Vagina (tissue), 2 donors: ENCODE measurements at regions of chr10 and their contacts with region 1.

Region 1: GRCh38 chr10:33073641-33074415 is 115.8 kb upstream of the ITGB1 start:
- DNase-seq: no peak
- H3K4me3 ChIP-seq: no peak overlapping the region
- H3K27ac ChIP-seq: peak overlapping the region; percentile 32
- H3K4me1 ChIP-seq: peaks cover 9% of the 10 kb centered on the region
- H3K27me3 ChIP-seq: no peaks in the 10 kb centered on the region
- CTCF ChIP-seq: no peak
- POLR2A ChIP-seq: no peak

Region 2: GRCh38 chr10:33041779-33042437 is 31.9 kb before region 1 on chr10:
- intact Hi-C with region 1: loop called (anchors 5 kb)
- DNase-seq: no peak
- H3K4me3 ChIP-seq: no peak overlapping the region
- H3K27ac ChIP-seq: no peak overlapping the region
- H3K4me1 ChIP-seq: no peaks in the 10 kb centered on the region
- H3K27me3 ChIP-seq: no peaks in the 10 kb centered on the region
- CTCF ChIP-seq: no peak
- POLR2A ChIP-seq: no peak

Region 3: DNA sequence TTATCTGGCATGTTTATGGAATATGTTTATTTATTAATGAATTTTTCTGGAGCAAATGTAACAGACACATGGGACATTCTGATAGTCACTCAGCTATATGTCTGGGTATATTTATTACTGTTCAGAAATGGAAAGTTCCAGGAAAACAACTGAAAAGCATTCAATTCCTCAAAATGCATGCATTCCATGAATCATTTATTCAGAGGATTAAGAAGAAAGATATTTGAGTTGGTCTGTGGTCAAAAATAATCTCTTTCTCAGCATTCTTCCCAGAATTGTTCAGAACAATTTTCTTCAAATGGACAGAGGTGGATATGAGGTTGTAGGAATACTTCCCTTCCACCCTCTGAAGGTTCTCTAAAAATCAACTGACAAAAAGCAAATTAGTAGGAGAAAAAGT is 18.2 kb before region 1 on chr10:
- intact Hi-C with region 1: no loop called
- DNase-seq: no peak
- H3K4me3 ChIP-seq: no peak overlapping the region
- H3K27ac ChIP-seq: no peak overlapping the region
- H3K4me1 ChIP-seq: no peaks in the 10 kb centered on the region
- H3K27me3 ChIP-seq: no peaks in the 10 kb centered on the region
- CTCF ChIP-seq: no peak
- POLR2A ChIP-seq: no peak

Region 4: GRCh38 chr10:33386971-33387370 is 313.1 kb after region 1 on chr10:
- intact Hi-C with region 1: no loop called
- DNase-seq: no peak
- H3K4me3 ChIP-seq: no peak overlapping the region
- H3K27ac ChIP-seq: no peak overlapping the region
- H3K4me1 ChIP-seq: peaks cover 6% of the 10 kb centered on the region
- H3K27me3 ChIP-seq: no peaks in the 10 kb centered on the region
- CTCF ChIP-seq: no peak
- POLR2A ChIP-seq: no peak